Dorsolateral prefrontal cortex (tissue), 120 donors: ENCODE measurements at regions of chr13 and their contacts with region 1.

Region 1: GRCh38 chr13:50801087-50801931 is 42.2 kb downstream of the DLEU7 start:
- DNase-seq: peak in 8 of 10 donors; percentile 32 to 65 (median 50)
- H3K4me3 ChIP-seq: peak overlapping the region in 20 of 59 donors; percentile 3 to 46 (median 22)
- H3K27ac ChIP-seq: peak overlapping the region in 7 of 59 donors; percentile 13 to 65 (median 33)
- H3K27me3 ChIP-seq: no peaks in the 10 kb centered on the region
- CTCF ChIP-seq: peak; percentile 46 to 90 (median 79)

Region 2: DNA sequence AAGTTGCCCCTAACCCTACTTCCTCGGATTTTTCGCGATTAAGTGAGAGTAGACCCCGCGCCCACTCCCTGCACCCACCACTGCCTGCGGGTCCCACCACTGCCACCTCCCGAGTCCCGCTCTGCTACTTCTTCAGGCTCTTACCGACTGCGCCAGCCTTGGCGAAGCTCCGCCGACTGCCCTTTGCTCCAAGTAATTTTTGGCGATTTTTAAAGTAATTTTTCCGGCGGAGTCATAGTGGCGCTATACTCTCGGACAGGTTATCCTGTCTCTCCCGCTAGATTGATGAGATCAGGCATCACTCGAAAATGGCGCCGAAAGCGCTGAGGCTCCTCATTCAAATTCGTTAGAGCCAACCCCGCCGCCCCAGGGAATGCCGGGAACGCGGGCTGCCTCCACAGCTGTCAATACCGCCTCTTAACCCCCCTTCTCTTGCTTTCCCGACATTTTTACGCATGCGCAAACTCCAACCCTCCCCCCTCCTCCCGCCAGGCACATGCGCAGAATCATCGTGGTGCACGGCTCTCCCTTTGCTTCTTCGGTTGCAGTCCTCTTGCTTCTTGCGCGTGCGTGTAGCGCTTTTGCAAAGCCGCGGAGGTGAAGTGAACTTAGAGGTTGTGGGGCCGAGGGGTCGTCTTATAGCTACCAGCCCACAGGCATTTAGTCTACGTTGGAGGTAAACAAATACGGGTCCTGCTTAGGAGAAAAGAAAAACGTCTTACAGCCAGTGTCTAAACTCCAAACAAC is 719.5 kb before region 1 on chr13:
- intact Hi-C with region 1: loop called (anchors 5 to 10 kb)
- DNase-seq: peak; percentile 96 to 99 (median 98)
- H3K4me3 ChIP-seq: peak overlapping the region; percentile 61 to 91 (median 79)
- H3K27ac ChIP-seq: peak overlapping the region; percentile 63 to 94 (median 86)
- H3K27me3 ChIP-seq: no peaks in the 10 kb centered on the region
- CTCF ChIP-seq: peak in 35 of 56 donors; percentile 9 to 50 (median 28)

Region 3: DNA sequence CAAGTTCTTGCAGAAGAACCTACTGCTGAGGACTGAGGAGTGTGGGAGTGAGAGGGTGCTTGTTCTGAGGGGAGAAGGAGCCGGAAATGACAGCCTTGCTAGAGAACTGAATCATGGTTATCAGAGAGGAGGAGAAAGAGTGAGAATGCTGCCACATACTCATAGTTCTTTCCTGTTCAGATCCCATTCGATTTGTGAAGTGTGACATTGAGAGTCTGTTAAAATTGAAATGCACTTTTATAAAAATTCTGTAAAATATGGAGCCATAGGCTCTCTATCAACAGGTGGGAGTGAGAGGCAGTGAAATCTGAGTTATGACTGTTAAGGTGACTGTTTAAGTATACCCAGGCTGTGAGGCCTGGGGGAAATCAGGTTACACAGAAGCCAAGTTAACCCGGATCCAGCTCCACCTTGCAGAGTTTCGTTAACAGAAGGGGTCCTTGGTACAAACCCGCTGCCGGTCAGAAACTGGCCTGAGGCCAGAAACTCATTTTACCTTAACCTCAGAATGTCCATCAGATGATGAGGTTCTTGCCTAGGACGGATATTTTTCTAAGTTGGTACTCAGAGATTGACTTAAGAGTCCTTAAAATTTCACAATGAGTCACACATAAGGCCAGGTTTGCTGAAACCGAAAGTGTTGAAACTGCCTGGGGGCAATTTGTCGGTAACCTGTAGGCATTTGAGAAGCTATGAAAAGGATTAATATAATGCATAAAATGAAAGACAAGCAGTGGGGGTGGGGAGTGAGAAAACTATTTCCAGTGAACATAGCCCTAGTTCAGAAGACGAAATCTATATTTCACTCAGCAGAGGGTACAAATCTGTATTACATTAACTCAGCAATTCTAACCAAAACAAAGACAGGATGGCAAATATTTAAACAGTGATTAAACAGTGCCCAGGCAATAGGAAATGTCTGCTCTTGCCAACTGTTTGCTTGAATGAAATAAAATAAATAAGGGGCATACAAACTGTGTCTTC is 435.6 kb before region 1 on chr13:
- intact Hi-C with region 1: loop called in 1 of 2 experiments (anchors 10 kb)
- DNase-seq: no peak
- H3K4me3 ChIP-seq: no peak overlapping the region
- H3K27ac ChIP-seq: no peak overlapping the region
- H3K27me3 ChIP-seq: no peaks in the 10 kb centered on the region
- CTCF ChIP-seq: no peak

Region 4: DNA sequence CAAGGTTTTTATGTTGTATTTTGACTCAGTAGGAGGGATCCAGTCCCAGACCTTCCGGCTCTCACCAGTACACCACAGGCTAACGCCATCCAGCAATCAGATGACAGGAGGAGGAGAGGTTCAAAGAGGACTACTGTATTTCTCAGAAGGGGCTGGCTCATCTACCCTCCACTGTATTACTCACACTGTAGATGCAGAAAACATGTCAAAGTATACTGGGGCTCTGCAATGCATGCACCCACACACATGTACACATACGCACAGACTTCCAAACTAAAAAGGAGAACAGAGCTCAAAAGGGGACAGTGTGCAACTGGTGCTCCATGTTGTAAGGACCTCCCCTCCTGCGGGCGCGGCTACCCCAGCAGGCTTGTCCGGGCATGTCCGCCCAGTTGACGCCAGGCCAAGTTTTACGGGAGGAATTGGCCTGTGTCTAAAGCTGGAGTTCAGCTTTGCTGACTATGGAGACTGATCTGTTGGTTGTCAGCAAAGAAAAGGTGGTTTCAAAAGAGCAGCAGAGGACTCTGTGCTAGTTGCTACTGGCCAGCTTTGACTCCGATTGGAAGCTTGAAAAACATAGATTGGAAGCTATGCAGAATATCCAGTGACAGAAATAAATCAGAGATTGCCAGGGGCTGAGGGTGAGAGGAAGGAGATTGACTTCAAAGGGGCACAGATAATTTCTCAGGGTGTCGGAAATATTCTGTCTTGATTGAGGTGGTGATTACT is 272.0 kb before region 1 on chr13:
- intact Hi-C with region 1: loop called in 1 of 2 experiments (anchors 5 kb)
- DNase-seq: peak; percentile 41 to 73 (median 70)
- H3K4me3 ChIP-seq: peak overlapping the region in 51 of 59 donors; percentile 6 to 58 (median 33)
- H3K27ac ChIP-seq: peak overlapping the region; percentile 0 to 93 (median 76)
- H3K27me3 ChIP-seq: no peaks in the 10 kb centered on the region
- CTCF ChIP-seq: peak in 6 of 56 donors; percentile 9 to 34 (median 17)

Region 5: DNA sequence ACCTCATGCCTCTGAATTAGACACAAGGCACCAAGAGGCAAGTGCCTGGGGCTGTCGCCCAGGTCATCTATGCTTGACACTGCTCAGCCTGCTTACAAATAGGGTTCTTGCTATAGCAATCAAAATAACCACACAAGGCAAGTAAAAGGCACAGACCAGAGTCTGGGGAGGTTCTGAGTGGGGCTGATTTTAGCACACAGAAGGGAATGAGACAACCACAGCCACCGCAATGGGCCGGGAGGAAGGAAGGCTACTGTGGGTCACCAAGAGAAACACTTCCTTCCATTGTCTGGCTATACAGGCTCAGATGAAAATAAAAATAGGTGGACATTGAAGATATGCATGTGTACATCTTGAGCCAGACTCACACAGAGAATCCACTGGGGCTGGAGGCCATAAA is 116.9 kb before region 1 on chr13:
- intact Hi-C with region 1: loop called (anchors 2 to 10 kb)
- DNase-seq: peak in 2 of 10 donors; percentile 31 to 39
- H3K4me3 ChIP-seq: no peak overlapping the region
- H3K27ac ChIP-seq: peak overlapping the region in 51 of 59 donors; percentile 32 to 95 (median 86)
- H3K27me3 ChIP-seq: no peaks in the 10 kb centered on the region
- CTCF ChIP-seq: no peak

Region 6: GRCh38 chr13:51134763-51135365 is 333.6 kb after region 1 on chr13:
- intact Hi-C with region 1: no loop called
- DNase-seq: no peak
- H3K4me3 ChIP-seq: no peak overlapping the region
- H3K27ac ChIP-seq: no peak overlapping the region
- H3K27me3 ChIP-seq: no peaks in the 10 kb centered on the region
- CTCF ChIP-seq: no peak